K562 (cell line): ENCODE measurements at regions of chr7 and their contacts with region 1.

Region 1: DNA sequence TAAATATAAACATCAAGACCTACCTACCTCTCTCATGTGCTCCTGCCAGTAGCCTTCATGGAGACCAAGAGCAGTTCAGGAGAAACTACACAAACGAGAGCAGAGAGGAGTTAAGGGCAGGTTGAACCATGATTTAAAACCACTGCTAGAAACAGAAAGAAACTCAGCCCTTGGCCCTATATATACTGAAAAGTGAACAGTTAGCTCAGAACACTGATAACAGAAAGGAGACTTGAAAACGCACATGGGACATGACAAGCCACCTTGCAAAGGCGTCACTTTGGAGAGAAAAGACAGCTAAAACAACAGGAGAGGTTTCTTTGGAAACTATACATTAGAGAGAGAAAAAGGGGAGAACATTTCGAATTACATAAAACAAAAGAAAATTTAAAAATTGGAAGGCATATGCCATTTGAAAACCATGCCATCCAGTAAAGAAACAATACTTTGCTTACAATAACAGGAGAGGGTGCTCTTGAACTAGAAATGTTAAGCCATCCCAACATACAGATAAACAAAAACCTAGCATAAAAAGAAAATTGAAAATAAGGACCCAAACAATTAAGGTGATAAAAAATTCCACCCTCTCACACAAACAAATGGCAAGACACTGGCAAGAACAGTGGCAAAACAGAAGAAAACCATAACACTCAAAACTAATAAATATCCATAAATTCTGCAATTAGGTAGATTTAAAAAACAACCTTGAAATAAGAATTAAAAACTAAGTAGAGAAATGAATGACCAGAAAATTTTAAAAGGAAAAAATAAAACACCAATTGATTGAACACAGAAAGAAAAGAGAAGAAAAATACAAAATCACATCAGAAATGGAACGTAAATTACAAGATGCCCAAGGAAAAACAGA is 232.7 kb downstream of the IMMP2L start:
- DNase-seq: peak in 2 of 4 experiments; percentile 41 to 64
- ATAC-seq: peak; percentile 82
- H3K4me3 ChIP-seq: peak overlapping the region; percentile 24
- H3K27ac ChIP-seq: peak overlapping the region; percentile 78
- H3K4me1 ChIP-seq: peaks cover 0 to 4% of the 10 kb centered on the region in 2 experiments; a peak in 1 of 5 replicates
- H3K27me3 ChIP-seq: no peaks in the 10 kb centered on the region
- CTCF ChIP-seq: peak; percentile 31 to 74 (median 45); a peak in 5 of 6 replicates
- EP300 ChIP-seq: peak; percentile 33; the same call in 1 of the 2 replicates
- POLR2A ChIP-seq: no peak
- RAD21 ChIP-seq: peak; percentile 83 to 91

Region 2: GRCh38 chr7:111089822-111090426 is 239.7 kb before region 1 on chr7:
- CTCF ChIA-PET with region 1: no interaction called
- POLR2A ChIA-PET with region 1: no interaction called
- in situ Hi-C with region 1: no loop called
- intact Hi-C with region 1: loop called (anchors 2 kb)
- DNase-seq: peak; percentile 66 to 72 (median 69)
- ATAC-seq: peak; percentile 83
- H3K4me3 ChIP-seq: no peak overlapping the region
- H3K27ac ChIP-seq: no peak overlapping the region
- H3K4me1 ChIP-seq: no peaks in the 10 kb centered on the region; a peak in 1 of 5 replicates
- H3K27me3 ChIP-seq: no peaks in the 10 kb centered on the region
- CTCF ChIP-seq: peak; percentile 54 to 80 (median 62)
- EP300 ChIP-seq: no peak
- POLR2A ChIP-seq: no peak
- RAD21 ChIP-seq: peak; percentile 67 to 77

Region 3: GRCh38 chr7:111388912-111389311 is 59.3 kb after region 1 on chr7:
- CTCF ChIA-PET with region 1: no interaction called
- POLR2A ChIA-PET with region 1: no interaction called
- in situ Hi-C with region 1: no loop called
- intact Hi-C with region 1: no loop called
- DNase-seq: no peak
- ATAC-seq: no peak
- H3K4me3 ChIP-seq: no peak overlapping the region
- H3K27ac ChIP-seq: no peak overlapping the region
- H3K4me1 ChIP-seq: no peaks in the 10 kb centered on the region
- H3K27me3 ChIP-seq: no peaks in the 10 kb centered on the region
- CTCF ChIP-seq: no peak
- EP300 ChIP-seq: no peak
- POLR2A ChIP-seq: no peak
- RAD21 ChIP-seq: no peak

Region 4: DNA sequence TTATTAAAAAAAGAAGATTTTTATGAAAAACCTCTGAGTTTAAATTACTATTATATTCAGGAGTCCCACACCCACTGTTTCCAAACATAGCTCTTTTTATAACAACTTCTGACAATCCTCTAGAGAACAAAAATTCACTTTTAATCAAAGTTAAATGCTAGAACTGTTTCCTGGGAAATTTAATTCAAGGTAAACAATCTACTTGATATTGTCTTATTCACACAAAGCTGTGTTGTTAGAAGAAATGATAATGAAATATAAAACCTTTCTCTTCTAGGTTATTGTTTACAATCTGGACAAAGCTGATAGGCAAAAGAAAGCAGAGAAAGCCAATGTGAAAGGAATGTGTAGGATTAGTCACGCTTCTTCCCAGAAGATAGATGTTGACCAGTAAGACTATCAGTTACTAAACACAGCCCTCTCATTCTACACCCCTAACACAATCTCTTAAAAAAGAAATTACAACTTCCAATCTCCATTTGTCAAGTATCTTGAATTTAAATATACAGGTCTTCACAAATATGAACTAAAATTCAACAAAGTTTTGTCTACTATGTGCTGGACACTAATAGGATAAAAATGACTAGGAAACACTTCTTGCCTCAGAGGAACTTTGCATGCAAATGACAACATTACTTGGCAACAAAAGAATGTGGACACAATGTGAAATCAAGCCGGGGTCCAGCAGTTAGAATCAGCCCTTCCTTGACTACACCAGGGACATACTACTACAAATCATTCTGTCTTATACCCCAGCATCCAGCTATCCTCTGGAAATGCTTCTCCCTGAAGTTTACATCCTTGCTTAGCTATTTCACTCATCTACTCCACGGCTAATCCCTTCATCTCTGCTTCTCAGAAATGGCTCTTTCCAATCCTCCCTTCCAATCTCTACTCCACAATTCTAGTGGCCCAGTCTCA is 109.0 kb after region 1 on chr7:
- CTCF ChIA-PET with region 1: no interaction called
- POLR2A ChIA-PET with region 1: no interaction called
- in situ Hi-C with region 1: no loop called
- intact Hi-C with region 1: loop called (anchors 1 kb)
- DNase-seq: peak; percentile 87 to 94 (median 92)
- ATAC-seq: peak; percentile 97
- H3K4me3 ChIP-seq: no peak overlapping the region
- H3K27ac ChIP-seq: peak overlapping the region; percentile 77
- H3K4me1 ChIP-seq: peaks cover 0 to 27% of the 10 kb centered on the region in 2 experiments; a peak in 2 of 5 replicates
- H3K27me3 ChIP-seq: no peaks in the 10 kb centered on the region
- CTCF ChIP-seq: no peak
- EP300 ChIP-seq: peak; percentile 99
- POLR2A ChIP-seq: no peak
- RAD21 ChIP-seq: no peak

Region 5: DNA sequence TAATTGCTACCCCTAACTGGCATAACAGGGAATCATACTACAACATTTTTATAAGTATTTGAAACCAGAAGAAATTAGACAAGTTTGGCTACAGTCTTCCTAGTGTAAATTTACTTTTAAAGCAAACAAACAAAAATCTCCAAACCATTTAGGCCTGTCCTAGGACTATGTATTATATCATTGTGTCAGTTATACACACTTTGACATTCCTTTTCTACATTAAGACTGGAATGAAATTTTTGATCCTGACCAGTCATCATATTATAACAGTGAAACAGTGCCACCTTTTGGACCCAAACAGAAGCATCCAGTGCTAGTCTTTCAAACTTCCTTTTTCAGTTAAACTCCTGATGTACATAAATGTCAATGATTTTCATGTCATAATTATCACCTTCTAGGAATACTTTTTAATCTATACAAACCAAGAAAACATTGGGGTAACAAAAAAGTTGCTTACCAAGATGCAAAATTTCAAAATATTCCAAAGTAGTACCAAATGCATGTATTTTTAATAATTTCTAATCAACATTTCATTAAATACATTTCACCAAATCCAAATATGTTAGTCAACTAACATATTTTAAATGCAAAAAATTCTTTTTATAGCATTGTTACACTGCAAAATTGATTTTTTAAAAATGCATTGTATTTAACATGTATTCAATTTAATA is 157.0 kb after region 1 on chr7:
- CTCF ChIA-PET with region 1: interaction called, 12 read pairs
- POLR2A ChIA-PET with region 1: no interaction called
- in situ Hi-C with region 1: no loop called
- intact Hi-C with region 1: loop called (anchors 1 kb)
- DNase-seq: peak; percentile 40 to 87 (median 60)
- ATAC-seq: peak; percentile 90
- H3K4me3 ChIP-seq: no peak overlapping the region
- H3K27ac ChIP-seq: no peak overlapping the region; the same call in 2 of the 3 replicates
- H3K4me1 ChIP-seq: no peaks in the 10 kb centered on the region
- H3K27me3 ChIP-seq: no peaks in the 10 kb centered on the region
- CTCF ChIP-seq: peak; percentile 73 to 96 (median 81)
- EP300 ChIP-seq: peak; percentile 44; the same call in 1 of the 2 replicates
- POLR2A ChIP-seq: no peak
- RAD21 ChIP-seq: peak; percentile 97 to 98

Region 6: DNA sequence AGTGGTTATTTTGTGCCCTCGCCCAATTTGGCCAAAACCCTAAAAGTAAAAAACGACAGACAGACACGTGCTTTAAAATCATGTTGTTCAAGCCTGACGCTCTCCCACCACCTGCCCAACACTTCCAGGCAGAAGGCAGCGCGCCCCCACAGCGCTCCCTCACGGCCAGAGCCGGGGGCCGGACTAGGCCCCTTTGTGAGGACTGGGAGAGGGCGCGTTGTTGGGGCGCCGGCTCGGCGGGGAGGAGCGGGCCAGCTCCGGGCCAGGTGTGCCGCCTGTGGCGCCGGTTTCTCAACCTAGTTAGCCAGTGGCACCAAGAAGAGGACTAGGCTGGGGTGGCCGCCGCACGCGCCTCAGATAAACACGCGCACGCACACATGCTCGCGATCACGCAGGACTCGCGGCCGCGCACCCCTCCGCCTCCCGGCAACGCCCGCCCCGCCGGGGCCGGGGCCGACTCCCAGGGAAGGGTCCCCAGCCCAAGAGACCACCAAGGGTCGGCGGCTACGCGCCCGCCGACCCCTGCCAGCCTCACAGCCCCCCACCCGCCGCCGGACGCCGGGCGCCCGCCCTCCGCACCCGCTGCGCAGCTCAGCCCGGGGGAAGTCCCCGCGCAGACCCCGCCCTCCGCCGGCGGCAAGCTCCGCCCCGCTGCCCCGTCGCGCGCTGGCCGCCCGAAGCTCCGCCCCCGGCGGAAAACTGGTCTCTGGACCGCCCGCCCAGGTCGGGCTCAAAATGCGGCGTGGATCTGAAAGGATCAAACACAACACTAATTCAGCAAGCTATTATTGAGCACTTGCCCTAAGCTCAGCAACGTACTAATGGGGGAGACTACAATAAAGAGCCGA is 232.5 kb after region 1 on chr7 and contains the start of gene IMMP2L:
- CTCF ChIA-PET with region 1: no interaction called
- POLR2A ChIA-PET with region 1: no interaction called
- in situ Hi-C with region 1: no loop called
- intact Hi-C with region 1: loop called (anchors 2 kb)
- DNase-seq: peak; percentile 98 to 100 (median 100)
- ATAC-seq: peak; percentile 96
- H3K4me3 ChIP-seq: peak within 1 kb of the TSS; percentile 67
- H3K27ac ChIP-seq: peak within 1 kb of the TSS; percentile 85
- H3K4me1 ChIP-seq: peaks cover 6 to 19% of the 10 kb centered on the region in 2 experiments; a peak in 4 of 5 replicates
- H3K27me3 ChIP-seq: no peaks in the 10 kb centered on the region; a peak in 1 of 5 replicates
- CTCF ChIP-seq: peak; percentile 81 to 87 (median 84)
- EP300 ChIP-seq: peak; percentile 62
- POLR2A ChIP-seq: peak; percentile 84
- RAD21 ChIP-seq: peak; percentile 79 to 80
- polyA plus RNA-seq, gene IMMP2L: 112 to 116 TPM

Region 7: GRCh38 chr7:111730476-111731300 is 401.1 kb after region 1 on chr7:
- CTCF ChIA-PET with region 1: interaction called, 22 read pairs
- POLR2A ChIA-PET with region 1: no interaction called
- in situ Hi-C with region 1: loop called (anchors 10 kb)
- intact Hi-C with region 1: loop called (anchors 1 kb)
- DNase-seq: peak; percentile 65 to 86 (median 71)
- ATAC-seq: peak; percentile 89
- H3K4me3 ChIP-seq: no peak overlapping the region
- H3K27ac ChIP-seq: no peak overlapping the region
- H3K4me1 ChIP-seq: peaks cover 3 to 10% of the 10 kb centered on the region in 2 experiments; a peak in 3 of 5 replicates
- H3K27me3 ChIP-seq: no peaks in the 10 kb centered on the region
- CTCF ChIP-seq: peak; percentile 82 to 93 (median 89)
- EP300 ChIP-seq: no peak
- POLR2A ChIP-seq: no peak
- RAD21 ChIP-seq: peak; percentile 79 to 95